Transverse colon (tissue), 4 donors: ENCODE measurements at regions of chr2 and their contacts with region 1.

Region 1: GRCh38 chr2:122009561-122009960 is 254.1 kb downstream of the TSN start:
- DNase-seq: no peak
- H3K4me3 ChIP-seq: no peak overlapping the region
- H3K27ac ChIP-seq: no peak overlapping the region
- H3K4me1 ChIP-seq: no peaks in the 10 kb centered on the region
- H3K27me3 ChIP-seq: no peaks in the 10 kb centered on the region
- CTCF ChIP-seq: no peak
- EP300 ChIP-seq: no peak
- POLR2A ChIP-seq: no peak

Region 2: DNA sequence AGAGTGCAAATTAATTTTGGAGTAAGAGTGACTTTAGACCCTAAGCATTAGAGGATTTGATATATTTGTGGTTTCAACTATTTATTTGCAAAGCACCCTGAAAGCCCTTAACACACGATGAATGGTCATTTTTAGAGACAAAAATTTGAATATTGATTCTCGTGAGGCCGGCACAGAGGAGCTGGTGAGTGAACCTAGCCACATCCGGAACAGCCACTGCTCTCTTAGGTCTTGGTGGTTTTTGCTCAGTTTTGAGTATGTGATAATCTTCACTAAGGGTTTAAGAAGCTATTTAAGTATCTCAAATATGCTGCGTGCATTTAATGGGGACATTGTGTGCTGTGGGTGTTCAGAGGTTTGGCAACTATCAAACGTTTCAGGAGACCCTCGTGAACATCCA is 49.3 kb before region 1 on chr2:
- in situ Hi-C with region 1: no loop called
- intact Hi-C with region 1: loop called (anchors 1 kb)
- DNase-seq: no peak
- H3K4me3 ChIP-seq: no peak overlapping the region
- H3K27ac ChIP-seq: no peak overlapping the region
- H3K4me1 ChIP-seq: no peaks in the 10 kb centered on the region
- H3K27me3 ChIP-seq: no peaks in the 10 kb centered on the region
- CTCF ChIP-seq: no peak
- EP300 ChIP-seq: no peak
- POLR2A ChIP-seq: no peak